Activated T-helper 2 cell treated with anti-CD3 and anti-CD28 coated beads, Interferon-gamma antibody, Interleukin-2, Interleukin-4, amounts not matched to agents 10 μg/mL and 5 μg/mL and 100 μg/mL, durations not matched to agents 14 hours and 24 hours and 36 hours (primary cell): ENCODE measurements at regions of chr14 and their contacts with region 1.

Region 1: DNA sequence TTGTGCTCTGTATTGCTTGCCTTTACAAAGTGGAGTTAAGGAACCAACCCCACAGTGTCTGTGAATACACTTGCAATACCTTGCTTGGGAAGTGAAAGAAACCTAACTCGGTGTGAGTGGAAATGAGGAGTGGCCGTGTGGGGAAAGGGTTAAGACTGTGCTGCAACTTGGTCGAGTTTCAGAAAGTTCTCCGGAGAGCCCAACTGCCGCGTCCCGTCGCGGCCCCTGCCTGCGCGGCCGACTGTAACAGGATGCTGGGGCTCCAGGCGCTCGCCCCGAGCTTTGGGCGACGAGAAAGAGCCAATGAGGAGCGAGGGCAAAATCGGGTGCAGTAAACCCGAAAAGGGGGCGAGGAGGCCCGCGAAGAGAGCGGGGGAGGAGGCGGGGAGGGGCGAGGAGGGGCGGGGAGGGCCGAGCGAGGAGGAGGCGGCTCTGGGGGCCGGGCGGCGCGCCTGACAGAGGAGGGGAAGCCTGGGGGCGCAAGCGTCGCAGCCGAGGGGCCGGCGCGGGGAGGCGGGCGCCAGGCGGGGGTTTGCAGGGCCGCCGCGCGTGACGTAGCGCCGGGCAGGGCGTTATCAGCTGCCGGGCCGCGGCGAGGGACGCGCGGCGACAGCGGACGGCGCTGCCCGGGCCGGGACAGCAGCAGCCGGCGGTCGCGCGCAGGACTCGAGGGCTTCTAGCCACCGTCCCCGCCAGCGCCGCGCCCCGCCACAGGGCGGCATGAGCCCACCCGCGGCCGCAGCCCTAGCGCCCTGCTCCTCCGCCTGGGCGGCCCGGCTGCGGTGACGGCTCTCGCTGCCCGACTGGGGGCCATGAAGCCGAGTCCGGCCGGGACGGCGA is at the start of gene DACT1:
- DNase-seq: peak; percentile 66
- H3K4me3 Mint-ChIP-seq: peak within 1 kb of the TSS; percentile 88
- H3K27ac Mint-ChIP-seq: peak within 1 kb of the TSS; percentile 89
- H3K4me1 Mint-ChIP-seq: peaks cover 42% of the 10 kb centered on the region
- H3K27me3 Mint-ChIP-seq: peaks cover 23% of the 10 kb centered on the region
- total RNA-seq, gene DACT1: 6.6 and 7.8 TPM in 2 replicates

Region 2: DNA sequence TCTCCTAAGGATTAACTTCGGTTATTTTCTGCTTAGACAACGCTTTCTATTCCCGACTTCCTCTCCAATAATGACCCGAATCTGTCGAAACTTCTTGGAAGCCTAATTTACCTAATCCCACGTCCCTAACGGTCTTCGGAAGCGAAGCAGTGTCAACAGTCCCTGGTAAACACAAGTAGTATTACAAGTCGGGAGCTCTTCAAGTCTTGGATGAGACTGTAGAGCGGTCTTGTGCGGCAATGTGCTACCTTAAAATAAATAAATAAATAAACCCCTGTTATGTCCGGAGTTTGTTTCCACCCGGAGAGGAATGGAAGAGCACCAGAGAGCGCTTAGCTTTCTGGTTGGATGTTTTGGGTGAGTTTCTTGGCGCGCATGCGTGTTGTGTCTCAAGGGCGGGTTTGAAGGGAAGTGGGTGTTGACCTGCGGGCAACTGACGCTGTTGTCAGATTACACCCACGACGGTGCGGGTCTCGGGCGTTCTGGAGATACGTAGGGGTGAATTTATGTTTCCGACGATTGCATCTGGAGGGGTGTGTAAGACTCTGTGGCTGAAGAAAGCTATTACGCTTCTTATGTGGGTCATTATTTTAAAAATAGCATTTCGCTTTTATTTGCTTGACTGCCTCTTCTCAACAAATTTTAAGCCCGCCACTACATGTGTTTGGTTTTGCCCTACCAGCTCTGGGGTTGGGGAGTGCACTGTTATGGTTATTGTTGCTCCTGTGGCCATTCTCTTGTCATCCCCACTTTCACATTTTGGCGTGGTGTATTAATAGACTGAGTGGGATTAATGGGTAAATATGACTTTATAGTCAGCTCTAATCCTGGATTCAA is 210.1 kb before region 1 on chr14 and contains the starts of genes KIAA0586 and TIMM9:
- intact Hi-C with region 1: loop called (anchors 5 kb)
- DNase-seq: peak; percentile 97
- H3K4me3 Mint-ChIP-seq: peak within 1 kb of the TSS; percentile 94
- H3K27ac Mint-ChIP-seq: peak within 1 kb of the TSS; percentile 99
- H3K4me1 Mint-ChIP-seq: peaks cover 37% of the 10 kb centered on the region
- H3K27me3 Mint-ChIP-seq: no peaks in the 10 kb centered on the region
- total RNA-seq, gene KIAA0586: 23.5 and 24.4 TPM in 2 replicates
- total RNA-seq, gene TIMM9: 53.3 and 65.1 TPM in 2 replicates

Region 3: GRCh38 chr14:58571769-58572472 is 65.7 kb before region 1 on chr14:
- intact Hi-C with region 1: loop called (anchors 2 kb)
- DNase-seq: peak; percentile 26
- H3K4me3 Mint-ChIP-seq: peak overlapping the region; percentile 44
- H3K27ac Mint-ChIP-seq: peak overlapping the region; percentile 84
- H3K4me1 Mint-ChIP-seq: peaks cover 22% of the 10 kb centered on the region
- H3K27me3 Mint-ChIP-seq: no peaks in the 10 kb centered on the region

Region 4: GRCh38 chr14:58626431-58626831 is 11.2 kb before region 1 on chr14:
- intact Hi-C with region 1: no loop called
- DNase-seq: no peak
- H3K4me3 Mint-ChIP-seq: no peak overlapping the region
- H3K27ac Mint-ChIP-seq: no peak overlapping the region
- H3K4me1 Mint-ChIP-seq: peaks cover 13% of the 10 kb centered on the region
- H3K27me3 Mint-ChIP-seq: no peaks in the 10 kb centered on the region

Region 5: DNA sequence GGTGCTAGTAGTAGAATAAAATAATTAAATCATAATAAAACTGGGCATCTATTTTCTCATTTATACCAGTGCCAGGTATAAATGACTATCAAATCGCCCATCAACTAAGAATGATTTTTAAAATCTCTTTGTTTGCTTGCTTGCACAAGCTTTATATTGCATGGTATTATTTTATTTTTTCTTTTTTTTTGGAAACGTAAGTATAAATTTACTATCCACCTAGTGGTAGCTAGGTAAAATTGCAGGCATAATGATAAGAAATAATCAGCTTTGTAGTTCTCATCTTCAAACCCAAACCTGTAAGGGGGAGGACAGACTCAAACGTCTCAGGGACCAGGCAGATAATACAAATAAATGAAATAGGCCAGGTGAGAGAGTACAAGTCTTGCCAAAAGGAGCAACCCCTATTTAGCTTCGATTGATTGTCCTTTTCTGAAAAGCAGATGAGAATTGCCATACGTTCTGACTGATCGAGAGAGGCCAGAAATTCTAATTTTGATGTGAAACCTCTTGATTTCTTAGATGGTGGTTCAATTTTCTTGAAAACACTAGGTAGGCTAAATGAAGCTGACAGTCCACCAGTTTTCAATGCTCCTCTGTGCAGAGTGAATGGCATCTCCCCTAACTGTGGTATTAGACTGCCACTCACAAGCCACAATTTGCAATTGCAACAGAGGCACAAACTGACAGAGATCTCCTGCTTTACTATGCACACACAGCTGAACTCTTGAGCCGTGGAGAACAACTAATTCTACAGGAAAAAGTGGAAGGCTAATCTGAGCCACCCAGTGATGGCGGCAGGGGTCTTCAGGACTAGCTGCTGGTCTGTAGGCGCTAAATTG is 189.5 kb after region 1 on chr14:
- intact Hi-C with region 1: loop called (anchors 5 kb)
- DNase-seq: no peak
- H3K4me3 Mint-ChIP-seq: no peak overlapping the region
- H3K27ac Mint-ChIP-seq: no peak overlapping the region
- H3K4me1 Mint-ChIP-seq: peaks cover 5% of the 10 kb centered on the region
- H3K27me3 Mint-ChIP-seq: no peaks in the 10 kb centered on the region

Region 6: DNA sequence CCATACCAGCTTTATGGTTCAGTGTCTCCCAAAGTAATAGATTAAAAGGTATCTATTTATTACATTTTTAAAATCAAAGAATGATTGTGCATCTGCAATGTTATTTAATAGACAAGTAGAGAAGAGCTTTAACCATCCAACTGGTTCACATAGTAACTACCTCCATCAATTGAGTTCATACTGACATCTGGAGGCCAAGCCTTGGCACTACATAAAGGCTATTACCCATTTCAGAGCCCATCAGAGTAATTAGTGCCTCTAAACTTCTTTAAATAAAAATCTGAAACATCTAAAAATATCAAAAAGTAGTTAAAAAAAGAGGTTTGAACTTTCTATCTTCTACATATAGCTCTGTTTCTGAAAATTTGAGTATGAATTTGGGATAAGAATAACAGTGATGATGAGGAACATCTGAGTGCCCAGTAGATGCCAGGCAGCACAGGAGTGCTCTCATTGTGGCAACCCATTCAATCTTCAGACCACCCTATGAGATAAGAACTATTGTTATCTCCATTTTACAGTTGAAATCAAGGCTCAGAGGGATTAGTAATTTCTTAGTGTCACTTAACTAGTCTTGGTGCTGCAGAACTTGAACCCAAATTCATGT is 417.9 kb after region 1 on chr14:
- intact Hi-C with region 1: loop called (anchors 1 kb)
- DNase-seq: no peak
- H3K4me3 Mint-ChIP-seq: no peak overlapping the region
- H3K27ac Mint-ChIP-seq: no peak overlapping the region
- H3K4me1 Mint-ChIP-seq: no peaks in the 10 kb centered on the region
- H3K27me3 Mint-ChIP-seq: peaks cover 2% of the 10 kb centered on the region